Prostate gland (tissue), 2 donors: ENCODE measurements at regions of chr7 and their contacts with region 1.

Region 1: GRCh38 chr7:98284335-98285036 is 3.0 kb downstream of the BRI3 start:
- DNase-seq: peak; percentile 77
- H3K4me3 ChIP-seq: peak overlapping the region; percentile 92 to 99
- H3K27ac ChIP-seq: peak overlapping the region; percentile 93 to 99
- H3K4me1 ChIP-seq: peaks cover 36% of the 10 kb centered on the region
- H3K27me3 ChIP-seq: no peaks in the 10 kb centered on the region
- CTCF ChIP-seq: peak in 1 of 4 experiments; percentile 3
- POLR2A ChIP-seq: peak; percentile 31

Region 2: GRCh38 chr7:98251841-98252639 is 32.4 kb before region 1 on chr7 and contains the start of gene TECPR1:
- intact Hi-C with region 1: loop called (anchors 5 kb)
- DNase-seq: peak; percentile 97
- H3K4me3 ChIP-seq: peak within 1 kb of the TSS; percentile 74 to 89
- H3K27ac ChIP-seq: peak within 1 kb of the TSS; percentile 88
- H3K4me1 ChIP-seq: peaks cover 11% of the 10 kb centered on the region
- H3K27me3 ChIP-seq: no peaks in the 10 kb centered on the region
- CTCF ChIP-seq: peak in 1 of 4 experiments; percentile 6
- POLR2A ChIP-seq: peak; percentile 60
- total RNA-seq, gene TECPR1: 31.4 to 62.7 TPM

Region 3: DNA sequence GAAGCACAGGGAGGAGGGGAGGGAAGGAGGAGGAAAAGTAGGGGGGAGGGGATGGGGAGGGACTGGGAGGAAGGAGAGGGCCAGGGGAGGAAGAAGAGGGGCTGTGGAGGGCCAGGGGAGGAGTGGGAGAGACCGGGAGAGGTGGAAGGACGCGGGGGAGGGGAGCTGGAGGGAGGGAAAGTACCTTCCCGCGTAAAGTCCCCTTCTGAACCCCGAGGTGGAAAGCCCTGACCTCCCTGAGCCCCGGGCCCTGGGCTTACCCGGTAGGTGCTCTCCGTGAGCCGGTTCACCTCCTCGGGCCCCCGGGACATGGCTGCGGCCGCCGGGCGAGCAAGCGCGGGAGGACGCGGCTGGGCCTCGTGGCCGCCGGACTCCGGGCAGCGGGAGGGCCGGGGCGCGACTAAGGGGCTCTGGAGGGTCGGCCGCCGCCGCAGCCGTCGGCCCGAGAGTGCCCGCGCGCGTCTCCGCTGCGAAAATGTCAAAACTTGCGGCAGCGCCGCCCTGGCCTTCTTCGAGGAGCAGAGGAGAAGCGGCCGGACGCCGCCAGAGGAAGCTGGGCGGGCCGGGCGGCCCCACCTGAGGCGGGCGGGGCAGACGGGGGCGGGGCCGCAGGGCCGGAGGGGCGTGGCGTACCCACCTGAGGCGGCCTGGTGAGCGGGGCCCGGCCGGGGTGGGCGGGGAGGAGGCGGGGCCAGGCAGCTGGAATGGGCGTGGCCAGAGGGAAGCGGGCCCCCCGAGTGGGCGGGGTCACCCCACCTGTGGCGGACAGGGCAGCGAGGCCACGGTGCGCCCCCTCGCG is 116.3 kb after region 1 on chr7 and contains the start of gene BAIAP2L1:
- intact Hi-C with region 1: loop called (anchors 5 kb)
- DNase-seq: peak; percentile 97
- H3K4me3 ChIP-seq: peak within 1 kb of the TSS; percentile 71 to 89
- H3K27ac ChIP-seq: peak within 1 kb of the TSS; percentile 91 to 97
- H3K4me1 ChIP-seq: no peaks in the 10 kb centered on the region
- H3K27me3 ChIP-seq: no peaks in the 10 kb centered on the region
- CTCF ChIP-seq: no peak
- POLR2A ChIP-seq: peak; percentile 95
- total RNA-seq, gene BAIAP2L1: 24.7 to 41.6 TPM